ENCODE measurements at regions of chr4 and their contacts with region 1.

Region 1: DNA sequence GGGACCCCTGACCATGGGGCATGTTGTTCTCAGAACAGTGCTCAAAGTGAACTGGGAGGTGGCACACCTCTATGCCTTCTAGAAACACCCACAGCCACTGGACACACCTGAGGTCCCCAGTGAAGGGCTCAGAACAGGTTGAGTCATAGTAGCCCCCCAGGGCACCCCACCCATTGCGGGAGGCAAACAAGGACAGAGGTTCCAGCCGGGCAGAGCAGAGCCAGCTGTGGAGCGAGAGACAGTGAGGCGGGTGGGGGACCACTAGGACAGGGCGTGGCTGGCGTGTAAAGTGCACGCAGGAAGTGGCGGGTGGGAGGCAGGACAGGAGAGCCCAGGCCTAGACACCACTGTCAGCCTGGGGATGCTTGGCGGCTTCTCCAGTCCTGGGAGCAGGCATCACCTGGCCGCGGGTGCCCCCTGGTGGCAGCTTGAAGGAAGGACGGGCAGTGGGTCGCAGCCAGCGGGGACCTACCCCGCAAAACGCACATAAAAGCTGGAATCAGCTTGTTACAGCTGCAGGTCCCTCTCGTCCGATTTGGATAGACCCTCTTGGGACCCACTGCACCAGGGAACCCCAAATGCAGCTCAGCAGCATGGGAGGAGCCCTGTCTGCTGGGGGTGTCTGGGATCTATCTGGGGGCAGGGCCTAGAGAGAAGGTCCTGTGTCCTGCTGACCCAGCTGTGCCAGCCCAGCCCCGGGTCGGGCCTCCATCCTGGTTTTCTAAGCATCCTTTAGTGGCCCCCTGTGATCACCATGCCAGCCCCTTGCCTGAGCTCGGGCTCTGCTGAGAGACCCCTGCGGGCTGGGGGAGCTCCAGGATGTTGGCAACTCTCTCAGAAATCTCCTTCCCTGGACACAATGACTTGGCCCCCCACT is 57.6 kb downstream of the WFS1 start:
- DNase-seq: peak; percentile 48 to 85 (median 69)
- ATAC-seq: peak; percentile 75
- H3K4me3 ChIP-seq: no peak overlapping the region
- H3K4me3 Mint-ChIP-seq: no peak overlapping the region
- H3K27ac ChIP-seq: no peak overlapping the region
- H3K27ac Mint-ChIP-seq: no peak overlapping the region
- H3K4me1 ChIP-seq: no peaks in the 10 kb centered on the region
- H3K4me1 Mint-ChIP-seq: peaks cover 0 to 17% (median 0%) of the 10 kb centered on the region in 7 donors
- H3K27me3 ChIP-seq: peaks cover 0 to 3% of the 10 kb centered on the region in 2 donors
- H3K27me3 Mint-ChIP-seq: peaks cover 7 to 47% (median 25%) of the 10 kb centered on the region in 5 donors

Region 2: GRCh38 chr4:6076391-6076790 is 250.9 kb before region 1 on chr4:
- CTCF ChIA-PET with region 1: no interaction called
- POLR2A ChIA-PET with region 1: no interaction called
- intact Hi-C with region 1: loop called in 1 of 2 experiments (anchors 2 kb)
- DNase-seq: no peak
- ATAC-seq: no peak
- H3K4me3 ChIP-seq: no peak overlapping the region
- H3K4me3 Mint-ChIP-seq: no peak overlapping the region
- H3K27ac ChIP-seq: no peak overlapping the region
- H3K27ac Mint-ChIP-seq: no peak overlapping the region
- H3K4me1 ChIP-seq: no peaks in the 10 kb centered on the region
- H3K4me1 Mint-ChIP-seq: no peaks in the 10 kb centered on the region
- H3K27me3 ChIP-seq: no peaks in the 10 kb centered on the region
- H3K27me3 Mint-ChIP-seq: peaks cover 0 to 10% (median 0%) of the 10 kb centered on the region in 5 donors

Region 3: GRCh38 chr4:6250235-6250983 is 76.9 kb before region 1 on chr4:
- CTCF ChIA-PET with region 1: interaction called, 109 read pairs
- POLR2A ChIA-PET with region 1: no interaction called
- intact Hi-C with region 1: loop called (anchors 1 kb)
- DNase-seq: peak in 7 of 9 donors; percentile 39 to 71 (median 60)
- ATAC-seq: peak; percentile 72
- H3K4me3 ChIP-seq: no peak overlapping the region
- H3K4me3 Mint-ChIP-seq: no peak overlapping the region
- H3K27ac ChIP-seq: no peak overlapping the region
- H3K27ac Mint-ChIP-seq: no peak overlapping the region
- H3K4me1 ChIP-seq: no peaks in the 10 kb centered on the region
- H3K4me1 Mint-ChIP-seq: peaks cover 0 to 6% (median 0%) of the 10 kb centered on the region in 7 donors
- H3K27me3 ChIP-seq: no peaks in the 10 kb centered on the region
- H3K27me3 Mint-ChIP-seq: peaks cover 38 to 52% (median 49%) of the 10 kb centered on the region in 5 donors

Region 4: GRCh38 chr4:6546681-6547447 is 219.6 kb after region 1 on chr4:
- CTCF ChIA-PET with region 1: no interaction called
- POLR2A ChIA-PET with region 1: no interaction called
- intact Hi-C with region 1: loop called in 1 of 2 experiments (anchors 10 kb)
- DNase-seq: peak; percentile 13 to 57 (median 36)
- ATAC-seq: peak; percentile 82
- H3K4me3 ChIP-seq: no peak overlapping the region
- H3K4me3 Mint-ChIP-seq: no peak overlapping the region
- H3K27ac ChIP-seq: no peak overlapping the region
- H3K27ac Mint-ChIP-seq: peak overlapping the region in 1 of 9 donors; percentile 18
- H3K4me1 ChIP-seq: no peaks in the 10 kb centered on the region
- H3K4me1 Mint-ChIP-seq: peaks cover 0 to 4% (median 0%) of the 10 kb centered on the region in 7 donors
- H3K27me3 ChIP-seq: no peaks in the 10 kb centered on the region
- H3K27me3 Mint-ChIP-seq: peaks cover 4 to 77% (median 58%) of the 10 kb centered on the region in 5 donors

Region 5: GRCh38 chr4:6855692-6856297 is 528.5 kb after region 1 on chr4:
- CTCF ChIA-PET with region 1: no interaction called
- POLR2A ChIA-PET with region 1: no interaction called
- intact Hi-C with region 1: no loop called
- DNase-seq: no peak
- ATAC-seq: peak; percentile 59
- H3K4me3 ChIP-seq: no peak overlapping the region
- H3K4me3 Mint-ChIP-seq: peak overlapping the region in 1 of 10 donors; percentile 11
- H3K27ac ChIP-seq: no peak overlapping the region
- H3K27ac Mint-ChIP-seq: peak overlapping the region in 4 of 9 donors; percentile 5 to 53 (median 46)
- H3K4me1 ChIP-seq: peaks cover 0 to 12% of the 10 kb centered on the region in 2 donors
- H3K4me1 Mint-ChIP-seq: peaks cover 5 to 23% (median 9%) of the 10 kb centered on the region in 7 donors
- H3K27me3 ChIP-seq: no peaks in the 10 kb centered on the region
- H3K27me3 Mint-ChIP-seq: no peaks in the 10 kb centered on the region